ENCODE measurements at regions of chr10 and their contacts with region 1.

Region 1: DNA sequence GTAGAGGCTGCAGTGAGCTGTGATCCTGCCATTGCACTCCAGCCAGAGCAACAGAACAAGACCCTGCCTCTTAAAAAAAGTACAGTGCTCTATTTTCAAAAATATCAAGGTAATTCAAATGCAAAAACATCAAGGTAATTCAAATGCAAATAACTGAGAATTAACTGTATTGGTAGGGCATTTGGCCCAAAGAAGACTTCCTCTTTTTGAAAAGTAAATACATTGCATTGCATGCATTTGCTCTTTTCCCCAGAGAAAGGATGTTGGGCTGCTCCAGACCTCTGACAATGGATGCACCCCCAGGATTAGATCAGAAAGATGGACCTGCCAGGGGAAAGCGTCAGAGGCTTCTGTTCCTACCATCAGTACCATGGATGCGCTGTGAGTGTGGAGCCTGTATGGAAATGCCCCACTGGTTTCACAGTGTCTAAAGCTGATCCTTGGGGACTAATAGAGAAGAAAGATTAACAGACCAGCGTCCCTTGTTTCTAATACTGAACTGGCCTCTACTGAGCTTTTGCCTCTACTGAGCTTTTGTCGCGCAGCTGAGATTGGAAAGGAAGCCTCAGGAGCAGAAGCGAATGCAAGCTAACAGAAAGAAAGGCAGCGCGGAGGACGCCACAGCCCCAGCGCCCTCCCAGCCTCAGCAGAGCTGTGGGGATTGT is 93.5 kb upstream of the LYZL2 start:
- DNase-seq: no peak
- ATAC-seq: no peak
- H3K4me3 Mint-ChIP-seq: no peak overlapping the region
- H3K27ac Mint-ChIP-seq: no peak overlapping the region
- H3K4me1 Mint-ChIP-seq: peaks cover 4% of the 10 kb centered on the region
- H3K27me3 Mint-ChIP-seq: no peaks in the 10 kb centered on the region

Region 2: DNA sequence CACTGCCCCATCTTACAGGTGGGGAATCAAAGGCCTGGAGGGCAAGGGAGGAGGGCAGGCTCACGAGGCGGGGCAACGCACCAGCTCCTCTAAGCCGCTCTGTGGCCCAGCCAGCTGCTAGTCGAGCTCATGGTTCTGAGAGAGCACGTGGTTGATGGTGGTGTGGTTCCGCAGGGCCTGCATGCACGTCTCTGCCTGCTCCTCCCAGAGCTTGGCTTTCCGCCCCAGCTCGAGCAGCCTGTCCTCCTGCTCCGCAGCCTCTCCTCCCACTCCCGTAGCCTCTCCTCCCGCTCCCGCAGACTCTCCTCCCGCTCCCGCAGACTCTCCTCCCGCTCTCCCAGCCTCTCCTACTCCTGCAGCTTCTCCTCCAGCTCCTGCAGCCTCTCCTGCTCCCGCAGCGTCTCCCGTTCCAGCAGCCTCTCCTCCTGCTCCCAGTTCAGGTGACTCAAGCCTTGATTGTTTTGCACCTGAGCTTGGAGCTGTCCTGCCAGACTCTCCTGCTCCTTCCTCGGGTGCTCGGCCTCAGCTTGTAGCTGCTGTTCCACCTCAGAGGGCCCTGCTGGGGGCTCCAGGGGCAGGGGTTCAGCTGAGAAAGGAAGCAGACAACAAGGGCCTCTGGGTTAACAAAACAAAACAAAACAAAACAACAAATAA is 354.9 kb before region 1 on chr10:
- CTCF ChIA-PET with region 1: no interaction called
- POLR2A ChIA-PET with region 1: no interaction called
- intact Hi-C with region 1: no loop called
- DNase-seq: no peak
- ATAC-seq: no peak
- H3K4me3 Mint-ChIP-seq: no peak overlapping the region
- H3K27ac Mint-ChIP-seq: no peak overlapping the region
- H3K4me1 Mint-ChIP-seq: peaks cover 15% of the 10 kb centered on the region
- H3K27me3 Mint-ChIP-seq: peaks cover 2% of the 10 kb centered on the region

Region 3: GRCh38 chr10:30687698-30688219 is 35.3 kb before region 1 on chr10:
- CTCF ChIA-PET with region 1: interaction called, 53 read pairs
- POLR2A ChIA-PET with region 1: no interaction called
- intact Hi-C with region 1: loop called (anchors 1 kb)
- DNase-seq: peak; percentile 90
- ATAC-seq: peak; percentile 58
- H3K4me3 Mint-ChIP-seq: peak overlapping the region; percentile 43
- H3K27ac Mint-ChIP-seq: peak overlapping the region; percentile 75
- H3K4me1 Mint-ChIP-seq: peaks cover 70% of the 10 kb centered on the region
- H3K27me3 Mint-ChIP-seq: peaks cover 13% of the 10 kb centered on the region

Region 4: DNA sequence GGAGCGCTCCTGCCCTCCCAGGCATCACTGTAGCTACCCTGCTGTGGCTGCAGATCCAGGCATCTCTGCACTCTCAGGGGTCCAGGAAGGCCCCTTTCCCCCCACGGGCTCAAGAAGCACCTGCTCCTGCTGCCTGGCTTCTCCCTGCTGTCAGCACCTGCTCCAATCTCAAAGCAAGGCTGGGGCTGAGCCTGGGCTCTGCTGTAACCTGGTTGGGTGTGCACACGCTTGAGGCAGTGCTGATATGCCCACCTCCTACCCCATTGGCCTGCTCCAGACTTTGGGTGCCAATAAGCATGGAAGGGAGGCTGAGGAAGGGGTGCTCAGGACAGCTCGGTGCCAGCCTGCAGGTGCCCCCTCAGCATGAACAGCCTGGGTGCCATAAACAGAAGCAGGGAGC is 123.6 kb after region 1 on chr10:
- CTCF ChIA-PET with region 1: no interaction called
- POLR2A ChIA-PET with region 1: no interaction called
- intact Hi-C with region 1: loop called in 1 of 2 experiments (anchors 5 kb)
- DNase-seq: no peak
- ATAC-seq: no peak
- H3K4me3 Mint-ChIP-seq: no peak overlapping the region
- H3K27ac Mint-ChIP-seq: no peak overlapping the region
- H3K4me1 Mint-ChIP-seq: peaks cover 5% of the 10 kb centered on the region
- H3K27me3 Mint-ChIP-seq: no peaks in the 10 kb centered on the region

Region 5: GRCh38 chr10:31490858-31491504 is 767.9 kb after region 1 on chr10:
- CTCF ChIA-PET with region 1: no interaction called
- POLR2A ChIA-PET with region 1: no interaction called
- intact Hi-C with region 1: loop called in 1 of 2 experiments (anchors 5 kb)
- DNase-seq: peak; percentile 32
- ATAC-seq: peak; percentile 51
- H3K4me3 Mint-ChIP-seq: no peak overlapping the region
- H3K27ac Mint-ChIP-seq: no peak overlapping the region
- H3K4me1 Mint-ChIP-seq: peaks cover 2% of the 10 kb centered on the region
- H3K27me3 Mint-ChIP-seq: no peaks in the 10 kb centered on the region

Region 6: GRCh38 chr10:31808258-31809218 is 1085.5 kb after region 1 on chr10:
- CTCF ChIA-PET with region 1: interaction called, 5 read pairs
- POLR2A ChIA-PET with region 1: no interaction called
- intact Hi-C with region 1: loop called (anchors 1 kb)
- DNase-seq: peak; percentile 28
- ATAC-seq: peak; percentile 51
- H3K4me3 Mint-ChIP-seq: peak overlapping the region; percentile 22
- H3K27ac Mint-ChIP-seq: peak overlapping the region; percentile 91
- H3K4me1 Mint-ChIP-seq: peaks cover 7% of the 10 kb centered on the region
- H3K27me3 Mint-ChIP-seq: no peaks in the 10 kb centered on the region

Measured in activated CD4-positive, alpha-beta T cell treated with anti-CD3 and anti-CD28 coated beads for 36 hours (primary cell).